ENCODE measurements at regions of chr2 and their contacts with region 1.

Region 1: GRCh38 chr2:3728104-3729054 is 25.0 kb downstream of the DCDC2C start:
- DNase-seq: peak; percentile 72
- ATAC-seq: peak; percentile 60
- H3K4me3 ChIP-seq: no peak overlapping the region
- H3K27ac ChIP-seq: no peak overlapping the region
- H3K4me1 ChIP-seq: peaks cover 6% of the 10 kb centered on the region; the same call in 1 of the 2 replicates
- H3K27me3 ChIP-seq: peaks cover 34% of the 10 kb centered on the region
- CTCF ChIP-seq: peak; percentile 75

Region 2: DNA sequence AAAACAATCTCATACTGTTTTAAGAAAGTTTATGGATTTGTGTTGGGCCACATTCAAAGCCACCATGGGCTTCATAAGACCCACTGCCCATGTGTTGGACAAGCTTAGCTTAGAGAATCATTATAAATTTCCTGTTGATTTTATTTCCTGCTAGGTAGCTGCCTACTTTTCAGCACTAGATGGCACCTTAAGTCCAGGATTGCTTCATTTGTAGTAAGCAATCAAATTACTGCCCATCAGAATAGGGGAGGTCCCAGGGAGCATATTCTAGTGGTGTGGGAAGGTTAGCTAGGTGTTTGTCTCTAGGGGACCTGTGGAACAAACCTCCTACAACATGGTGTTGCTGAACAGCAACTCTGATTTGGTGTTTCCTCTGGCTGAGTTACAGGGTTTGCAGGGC is 36.0 kb before region 1 on chr2:
- CTCF ChIA-PET with region 1: interaction called, 12 read pairs
- POLR2A ChIA-PET with region 1: no interaction called
- intact Hi-C with region 1: loop called (anchors 1 kb)
- DNase-seq: peak; percentile 51
- ATAC-seq: peak; percentile 71
- H3K4me3 ChIP-seq: no peak overlapping the region
- H3K27ac ChIP-seq: no peak overlapping the region
- H3K4me1 ChIP-seq: no peaks in the 10 kb centered on the region
- H3K27me3 ChIP-seq: peaks cover 42% of the 10 kb centered on the region
- CTCF ChIP-seq: peak; percentile 75

Region 3: DNA sequence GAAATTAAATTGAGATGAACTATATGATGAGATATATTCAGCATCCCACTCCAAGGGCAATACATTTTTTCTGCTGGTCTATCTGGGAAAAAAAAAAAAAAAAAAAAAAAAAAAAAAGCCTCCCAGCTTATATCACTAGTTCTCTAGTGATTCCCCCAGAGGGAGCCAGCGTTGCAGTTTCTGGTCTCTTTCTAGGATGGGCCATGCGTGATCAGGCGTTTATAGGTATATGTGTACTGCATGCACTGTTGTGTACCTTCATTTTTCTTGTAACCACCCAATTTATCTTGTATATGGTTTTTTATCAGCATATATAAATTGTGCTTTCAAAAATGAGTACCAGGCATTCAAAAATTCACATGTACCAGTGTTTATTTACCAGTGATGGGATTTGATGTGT is 10.1 kb after region 1 on chr2:
- CTCF ChIA-PET with region 1: interaction called, 11 read pairs
- POLR2A ChIA-PET with region 1: no interaction called
- intact Hi-C with region 1: no loop called
- DNase-seq: peak; percentile 66
- ATAC-seq: peak; percentile 80
- H3K4me3 ChIP-seq: no peak overlapping the region
- H3K27ac ChIP-seq: no peak overlapping the region
- H3K4me1 ChIP-seq: no peaks in the 10 kb centered on the region
- H3K27me3 ChIP-seq: peaks cover 45% of the 10 kb centered on the region
- CTCF ChIP-seq: peak; percentile 69

Region 4: GRCh38 chr2:3805201-3805939 is 77.0 kb after region 1 on chr2:
- CTCF ChIA-PET with region 1: interaction called, 5 read pairs
- POLR2A ChIA-PET with region 1: no interaction called
- intact Hi-C with region 1: loop called (anchors 2 kb)
- DNase-seq: peak; percentile 70
- ATAC-seq: peak; percentile 85
- H3K4me3 ChIP-seq: no peak overlapping the region
- H3K27ac ChIP-seq: no peak overlapping the region
- H3K4me1 ChIP-seq: no peaks in the 10 kb centered on the region
- H3K27me3 ChIP-seq: peaks cover 10% of the 10 kb centered on the region; the same call in 1 of the 2 replicates
- CTCF ChIP-seq: peak; percentile 80